ENCODE measurements at regions of chr18 and their contacts with region 1.

Region 1: GRCh38 chr18:76982841-76983587 is 149.6 kb downstream of the MBP start:
- DNase-seq: peak; percentile 93
- ATAC-seq: peak; percentile 97
- H3K4me3 Mint-ChIP-seq: no peak overlapping the region
- H3K27ac Mint-ChIP-seq: no peak overlapping the region
- H3K4me1 Mint-ChIP-seq: peaks cover 6% of the 10 kb centered on the region
- H3K27me3 Mint-ChIP-seq: no peaks in the 10 kb centered on the region

Region 2: GRCh38 chr18:76544511-76545345 is 438.3 kb before region 1 on chr18:
- CTCF ChIA-PET with region 1: no interaction called
- DNase-seq: no peak
- ATAC-seq: no peak
- H3K4me3 Mint-ChIP-seq: no peak overlapping the region
- H3K27ac Mint-ChIP-seq: no peak overlapping the region
- H3K4me1 Mint-ChIP-seq: no peaks in the 10 kb centered on the region
- H3K27me3 Mint-ChIP-seq: no peaks in the 10 kb centered on the region

Region 3: DNA sequence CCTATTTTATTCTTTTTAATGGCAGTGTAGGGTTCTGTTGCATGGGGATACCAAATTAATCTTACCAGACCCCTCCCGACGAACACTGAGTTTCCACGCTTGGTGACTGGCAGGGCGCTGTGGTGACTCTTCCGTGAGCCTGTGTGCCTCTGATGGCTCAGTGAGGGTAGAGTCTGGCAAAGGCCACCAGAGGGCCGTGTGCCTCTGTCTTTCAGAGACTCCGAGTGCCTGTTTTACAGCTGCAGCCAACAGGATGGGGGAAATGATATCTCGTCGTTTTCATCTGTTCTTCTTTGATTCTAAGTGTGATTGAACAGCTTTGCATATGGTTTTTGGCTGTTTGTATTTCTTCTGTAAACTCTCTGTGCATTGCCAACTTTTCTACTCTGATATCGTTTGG is 60.9 kb before region 1 on chr18:
- CTCF ChIA-PET with region 1: interaction called, 46 read pairs
- DNase-seq: peak; percentile 58
- ATAC-seq: peak; percentile 97
- H3K4me3 Mint-ChIP-seq: no peak overlapping the region
- H3K27ac Mint-ChIP-seq: no peak overlapping the region
- H3K4me1 Mint-ChIP-seq: peaks cover 5% of the 10 kb centered on the region
- H3K27me3 Mint-ChIP-seq: no peaks in the 10 kb centered on the region

Region 4: DNA sequence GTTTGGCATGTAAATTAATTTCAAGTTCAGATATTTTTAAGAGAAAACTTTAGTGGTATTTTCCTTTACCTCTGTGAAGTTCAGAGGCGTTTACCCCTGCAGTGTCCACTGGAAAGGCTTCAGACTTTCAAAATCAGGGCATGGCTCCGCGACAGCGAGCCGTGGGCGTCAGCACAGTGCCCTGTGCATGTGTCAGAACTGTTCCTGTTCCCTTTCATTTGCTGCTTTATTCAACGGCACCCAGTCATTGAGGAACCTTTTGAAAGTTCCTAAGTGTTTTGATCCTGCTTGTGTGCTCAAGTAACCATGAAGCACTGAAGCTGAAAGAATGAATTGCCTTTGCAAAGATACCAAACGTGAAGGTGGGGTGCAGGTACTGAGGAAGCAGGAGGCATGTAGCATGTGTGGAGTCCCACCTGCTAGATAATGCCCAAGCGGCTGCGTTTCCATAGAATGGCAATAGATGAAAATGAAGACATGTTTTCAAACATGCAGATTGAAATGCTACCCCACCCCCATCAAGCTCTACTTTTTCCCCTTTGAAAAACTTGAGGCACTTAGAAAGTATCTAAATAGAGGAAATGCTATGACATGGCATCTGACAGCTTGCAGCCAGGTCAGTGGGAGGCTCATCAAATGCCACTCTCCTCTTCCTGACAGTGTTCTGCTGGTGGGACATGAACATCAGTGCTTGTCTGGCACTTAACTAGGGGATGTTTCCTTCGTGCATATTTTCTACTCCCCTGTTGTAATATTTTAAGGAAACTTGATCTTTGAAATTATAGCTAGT is 12.0 kb before region 1 on chr18:
- CTCF ChIA-PET with region 1: interaction called, 17 read pairs
- DNase-seq: no peak
- ATAC-seq: no peak
- H3K4me3 Mint-ChIP-seq: no peak overlapping the region
- H3K27ac Mint-ChIP-seq: no peak overlapping the region
- H3K4me1 Mint-ChIP-seq: no peaks in the 10 kb centered on the region
- H3K27me3 Mint-ChIP-seq: no peaks in the 10 kb centered on the region

Region 5: DNA sequence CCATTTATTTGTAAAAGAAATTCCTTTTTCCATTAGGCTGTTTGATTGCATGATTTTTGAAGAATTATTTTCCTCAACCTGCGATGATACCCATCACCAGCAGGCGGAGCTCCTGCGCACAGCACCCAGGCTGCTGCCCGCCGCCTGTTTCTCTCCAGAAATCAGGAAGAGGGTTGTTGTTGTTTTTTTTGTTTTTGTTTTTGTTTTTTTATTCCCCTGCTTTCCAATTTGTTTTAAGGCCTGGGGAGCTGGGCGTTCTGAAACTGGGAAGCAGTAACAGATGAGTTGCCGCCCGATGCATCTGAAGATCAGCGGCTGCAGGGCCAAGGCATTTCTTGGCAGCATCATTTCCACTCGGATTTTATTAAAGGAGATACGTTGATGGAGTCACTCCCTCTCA is 17.5 kb after region 1 on chr18:
- CTCF ChIA-PET with region 1: interaction called, 24 read pairs
- DNase-seq: peak; percentile 60
- ATAC-seq: no peak
- H3K4me3 Mint-ChIP-seq: no peak overlapping the region
- H3K27ac Mint-ChIP-seq: peak overlapping the region; percentile 42
- H3K4me1 Mint-ChIP-seq: peaks cover 37% of the 10 kb centered on the region
- H3K27me3 Mint-ChIP-seq: no peaks in the 10 kb centered on the region